ENCODE measurements at regions of chr7 and their contacts with region 1.

Region 1: GRCh38 chr7:142535123-142535779 is 214.0 kb upstream of the PRSS1 start:
- DNase-seq: peak; percentile 86
- H3K4me3 ChIP-seq: no peak overlapping the region
- H3K27ac ChIP-seq: peak overlapping the region; percentile 46
- H3K4me1 ChIP-seq: peaks cover 37% of the 10 kb centered on the region
- H3K27me3 ChIP-seq: no peaks in the 10 kb centered on the region
- CTCF ChIP-seq: peak; percentile 87 to 90
- POLR2A ChIP-seq: peak; percentile 45

Region 2: DNA sequence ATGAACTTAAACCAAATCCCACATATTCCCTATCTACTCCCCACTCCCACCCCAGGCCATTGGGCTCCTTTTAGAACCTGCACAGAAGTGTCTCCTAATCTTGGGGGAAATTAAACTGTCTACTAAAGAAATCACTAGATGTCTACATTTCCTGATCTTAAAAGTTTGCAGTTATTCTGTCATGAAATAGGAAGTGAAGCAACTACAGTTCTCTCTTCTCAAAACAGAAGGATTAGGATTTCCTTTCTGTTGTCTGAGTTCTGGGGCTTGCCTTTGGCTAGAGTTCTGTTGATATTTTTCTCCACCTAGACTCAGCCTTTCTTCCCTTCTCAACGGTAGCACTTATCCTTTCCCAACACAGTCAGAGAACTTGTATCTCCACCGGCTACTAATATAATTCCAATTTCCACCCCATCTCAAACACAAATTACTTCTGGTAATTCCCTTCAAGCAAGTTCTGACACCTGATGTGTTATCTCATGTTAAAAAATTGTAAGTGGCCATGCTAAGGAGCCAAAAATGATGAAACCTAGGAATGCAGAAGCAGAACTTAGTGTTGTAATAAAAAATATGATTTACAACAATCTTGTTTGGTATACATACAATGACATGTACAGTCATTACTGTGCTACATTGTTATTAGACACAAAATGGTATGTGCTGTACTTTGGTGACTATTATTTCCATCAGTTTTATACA is 607.0 kb before region 1 on chr7:
- CTCF ChIA-PET with region 1: no interaction called
- POLR2A ChIA-PET with region 1: no interaction called
- dilution Hi-C with region 1: no loop called
- intact Hi-C with region 1: no loop called
- DNase-seq: no peak
- H3K4me3 ChIP-seq: no peak overlapping the region
- H3K27ac ChIP-seq: no peak overlapping the region
- H3K4me1 ChIP-seq: no peaks in the 10 kb centered on the region
- H3K27me3 ChIP-seq: no peaks in the 10 kb centered on the region
- CTCF ChIP-seq: no peak
- POLR2A ChIP-seq: no peak

Region 3: DNA sequence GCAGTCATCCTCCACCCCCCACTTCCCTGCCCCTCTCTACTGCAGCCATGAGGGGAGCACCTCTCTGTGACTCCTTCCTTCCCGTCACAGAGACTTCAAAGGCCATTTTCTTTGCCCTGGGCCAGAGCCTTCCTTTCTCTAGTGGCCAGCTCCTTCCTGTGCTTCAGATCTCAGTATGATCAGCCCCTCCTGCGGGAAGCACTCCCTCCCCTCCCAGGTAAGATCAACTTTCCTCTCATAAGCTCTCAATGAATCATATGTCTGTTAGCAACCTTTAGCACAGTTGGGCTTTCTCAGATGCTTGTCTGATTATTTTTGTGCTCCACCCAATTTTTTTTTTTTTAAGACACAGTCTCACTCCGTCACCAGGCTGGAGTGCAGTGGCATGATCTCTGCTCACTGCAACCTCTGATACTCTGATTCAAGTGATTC is 27.0 kb before region 1 on chr7:
- CTCF ChIA-PET with region 1: no interaction called
- POLR2A ChIA-PET with region 1: no interaction called
- dilution Hi-C with region 1: no loop called
- intact Hi-C with region 1: no loop called
- DNase-seq: no peak
- H3K4me3 ChIP-seq: no peak overlapping the region
- H3K27ac ChIP-seq: no peak overlapping the region
- H3K4me1 ChIP-seq: no peaks in the 10 kb centered on the region
- H3K27me3 ChIP-seq: peaks cover 4 to 7% of the 10 kb centered on the region in 2 experiments
- CTCF ChIP-seq: no peak
- POLR2A ChIP-seq: no peak

Region 4: DNA sequence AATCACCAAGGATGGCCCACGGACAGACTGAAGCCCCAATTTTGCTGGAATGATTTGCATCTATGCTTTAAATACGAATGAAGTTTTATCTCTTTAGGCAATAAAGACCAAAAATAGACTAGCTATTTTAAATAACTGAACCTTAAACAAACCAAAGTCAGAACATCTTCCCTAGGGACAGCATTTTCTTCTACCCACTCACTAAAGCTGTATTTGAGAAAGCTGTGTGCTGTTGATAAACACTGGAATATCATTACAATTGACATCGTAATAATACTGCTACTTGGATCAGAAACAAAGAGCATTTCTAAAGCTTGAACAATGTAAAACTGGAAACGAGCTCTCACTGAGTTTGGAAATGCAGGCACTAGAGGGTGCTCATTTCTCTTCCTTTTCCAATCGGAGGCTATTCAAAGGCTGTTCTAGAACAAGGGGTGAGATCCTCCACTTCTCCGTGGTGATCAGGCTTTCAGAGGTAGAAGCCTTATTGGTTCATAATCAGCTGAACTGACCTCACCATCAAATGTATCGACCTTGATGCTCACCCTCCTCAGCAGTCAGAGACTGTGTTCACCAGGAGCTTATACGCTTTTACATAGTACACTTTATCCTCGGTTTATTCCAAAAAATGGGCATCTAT is 11.3 kb before region 1 on chr7:
- CTCF ChIA-PET with region 1: interaction called, 36 read pairs
- POLR2A ChIA-PET with region 1: no interaction called
- dilution Hi-C with region 1: no loop called
- intact Hi-C with region 1: no loop called
- DNase-seq: no peak
- H3K4me3 ChIP-seq: no peak overlapping the region
- H3K27ac ChIP-seq: no peak overlapping the region
- H3K4me1 ChIP-seq: no peaks in the 10 kb centered on the region
- H3K27me3 ChIP-seq: peaks cover 17 to 28% of the 10 kb centered on the region in 2 experiments
- CTCF ChIP-seq: peak in 1 of 2 donors; percentile 4
- POLR2A ChIP-seq: no peak

Region 5: DNA sequence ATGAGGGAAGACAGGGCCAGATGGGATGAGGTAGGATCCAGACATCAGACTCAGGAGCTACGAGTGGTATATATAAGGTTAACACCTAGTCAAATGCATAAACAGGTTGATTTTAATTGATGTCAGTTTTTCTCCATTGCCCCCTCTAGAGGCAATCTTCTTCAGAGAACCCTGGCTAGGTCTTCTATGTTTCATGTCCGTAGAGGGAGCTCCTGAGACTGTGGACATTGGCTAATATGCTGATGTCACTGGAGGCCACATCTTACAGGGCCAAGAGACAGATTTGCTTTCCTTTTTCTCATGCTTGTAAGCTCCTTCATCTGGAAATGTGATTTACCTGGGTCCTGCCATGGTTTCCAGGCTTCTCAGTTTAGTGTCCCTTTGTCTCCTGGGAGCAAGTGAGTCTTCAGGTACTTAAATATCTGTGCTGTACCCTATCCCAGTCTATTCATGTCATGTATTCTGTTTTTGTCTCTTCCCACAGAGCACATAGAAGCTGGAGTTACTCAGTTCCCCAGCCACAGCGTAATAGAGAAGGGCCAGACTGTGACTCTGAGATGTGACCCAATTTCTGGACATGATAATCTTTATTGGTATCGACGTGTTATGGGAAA is 52.4 kb after region 1 on chr7:
- CTCF ChIA-PET with region 1: interaction called, 181 read pairs
- POLR2A ChIA-PET with region 1: no interaction called
- dilution Hi-C with region 1: no loop called
- intact Hi-C with region 1: loop called (anchors 1 kb)
- DNase-seq: peak; percentile 66
- H3K4me3 ChIP-seq: no peak overlapping the region
- H3K27ac ChIP-seq: no peak overlapping the region
- H3K4me1 ChIP-seq: peaks cover 10% of the 10 kb centered on the region
- H3K27me3 ChIP-seq: no peaks in the 10 kb centered on the region
- CTCF ChIP-seq: peak; percentile 63 to 82
- POLR2A ChIP-seq: no peak

Region 6: GRCh38 chr7:142632291-142633134 is 97.3 kb after region 1 on chr7:
- CTCF ChIA-PET with region 1: interaction called, 84 read pairs
- POLR2A ChIA-PET with region 1: no interaction called
- dilution Hi-C with region 1: no loop called
- intact Hi-C with region 1: loop called (anchors 1 kb)
- DNase-seq: peak; percentile 74
- H3K4me3 ChIP-seq: no peak overlapping the region
- H3K27ac ChIP-seq: no peak overlapping the region
- H3K4me1 ChIP-seq: no peaks in the 10 kb centered on the region
- H3K27me3 ChIP-seq: peaks cover 1 to 3% of the 10 kb centered on the region in 2 experiments
- CTCF ChIP-seq: peak; percentile 69 to 73
- POLR2A ChIP-seq: no peak

Region 7: DNA sequence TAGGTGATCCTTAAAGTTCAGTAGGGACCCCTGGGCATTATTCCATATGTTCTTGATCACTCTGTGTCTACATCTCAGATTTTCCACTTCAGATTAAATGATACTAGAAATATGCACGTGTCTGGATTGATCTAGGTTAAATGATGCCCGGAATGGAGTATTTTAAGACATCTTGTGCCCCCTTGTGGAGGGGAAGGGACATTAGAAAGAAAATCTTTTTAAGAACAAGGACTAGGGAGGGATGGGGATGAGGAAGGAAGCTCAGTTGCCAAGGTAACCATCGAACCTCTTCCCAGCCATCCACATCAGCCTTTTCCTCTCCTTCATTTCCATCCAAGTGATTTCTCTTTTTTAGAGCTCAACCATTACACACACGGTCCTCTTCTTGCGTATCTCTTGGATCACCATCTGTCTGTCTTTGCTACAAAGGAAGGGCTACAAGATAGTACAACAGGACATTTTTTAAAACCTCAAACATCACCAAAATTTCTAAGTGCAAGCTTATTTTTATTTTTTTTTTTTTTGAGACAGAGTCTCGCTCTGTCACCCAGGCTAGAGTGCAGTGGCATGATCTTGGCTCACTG is 276.0 kb after region 1 on chr7:
- CTCF ChIA-PET with region 1: interaction called, 119 read pairs
- POLR2A ChIA-PET with region 1: interaction called, 3 read pairs
- dilution Hi-C with region 1: no loop called
- intact Hi-C with region 1: loop called (anchors 1 kb)
- DNase-seq: peak; percentile 63
- H3K4me3 ChIP-seq: no peak overlapping the region
- H3K27ac ChIP-seq: no peak overlapping the region
- H3K4me1 ChIP-seq: peaks cover 50% of the 10 kb centered on the region
- H3K27me3 ChIP-seq: no peaks in the 10 kb centered on the region
- CTCF ChIP-seq: peak; percentile 39 to 59
- POLR2A ChIP-seq: no peak

Region 8: DNA sequence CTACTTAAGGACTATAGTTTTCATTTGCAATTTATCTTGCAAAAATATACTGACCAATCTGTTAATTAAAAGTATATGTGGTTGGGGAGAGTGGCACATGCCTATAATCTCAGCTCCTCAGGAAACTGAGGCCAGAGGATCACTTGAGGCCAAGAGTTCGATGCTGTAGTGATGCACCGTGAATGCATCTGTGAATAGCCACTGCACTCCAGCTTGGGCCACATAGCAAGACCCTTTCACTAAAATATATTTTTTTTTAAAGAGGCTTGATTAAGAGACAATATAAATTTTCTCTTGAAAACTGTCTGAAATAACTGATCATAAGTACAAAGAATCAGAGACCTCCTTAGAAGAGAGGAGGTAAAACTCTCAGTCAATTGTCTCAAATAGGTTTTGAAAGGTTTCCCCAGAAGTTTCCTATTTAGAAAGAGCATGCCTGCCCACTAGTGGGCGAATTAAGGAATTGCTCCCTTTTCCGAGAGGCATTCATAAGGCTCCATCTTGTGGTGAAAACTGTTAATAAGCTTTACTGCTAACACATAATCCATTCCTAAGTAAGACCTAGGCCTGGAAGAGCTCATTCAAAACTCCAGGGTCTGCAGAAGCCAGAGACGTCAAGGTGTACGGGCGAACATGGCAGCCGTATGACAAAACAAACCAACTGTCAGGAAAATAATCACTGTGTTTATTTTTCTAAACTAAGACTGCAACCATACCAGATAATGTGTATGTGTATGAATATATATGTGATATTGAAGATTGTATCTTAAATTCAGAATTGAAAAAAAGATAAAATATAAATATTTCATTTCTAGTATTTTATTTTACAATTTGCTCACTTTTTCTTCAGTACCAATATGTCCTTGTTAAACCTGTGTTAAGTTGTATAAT is 679.8 kb after region 1 on chr7:
- CTCF ChIA-PET with region 1: interaction called, 20 read pairs
- POLR2A ChIA-PET with region 1: no interaction called
- dilution Hi-C with region 1: no loop called
- intact Hi-C with region 1: no loop called
- DNase-seq: peak; percentile 90
- H3K4me3 ChIP-seq: no peak overlapping the region
- H3K27ac ChIP-seq: no peak overlapping the region
- H3K4me1 ChIP-seq: no peaks in the 10 kb centered on the region
- H3K27me3 ChIP-seq: peaks cover 3 to 5% of the 10 kb centered on the region in 2 experiments
- CTCF ChIP-seq: peak; percentile 95 to 99
- POLR2A ChIP-seq: no peak